ENCODE measurements at regions of chr17 and their contacts with region 1.

Region 1: GRCh38 chr17:48101012-48101720 is at the start of gene CBX1:
- DNase-seq: peak; percentile 83 to 94
- H3K4me3 ChIP-seq: peak within 1 kb of the TSS; percentile 89
- H3K27ac ChIP-seq: peak within 1 kb of the TSS; percentile 71
- H3K4me1 ChIP-seq: peaks cover 25% of the 10 kb centered on the region
- H3K27me3 ChIP-seq: no peaks in the 10 kb centered on the region
- CTCF ChIP-seq: no peak
- total RNA-seq, gene CBX1: 73.6 and 93.9 TPM in 2 replicates

Region 2: GRCh38 chr17:48047741-48048383 is 53.3 kb before region 1 on chr17 and contains the start of gene NFE2L1:
- CTCF ChIA-PET with region 1: no interaction called
- POLR2A ChIA-PET with region 1: interaction called, 4 read pairs
- intact Hi-C with region 1: loop called (anchors 5 kb)
- DNase-seq: peak; percentile 96 to 99
- H3K4me3 ChIP-seq: peak within 1 kb of the TSS; percentile 70
- H3K27ac ChIP-seq: peak within 1 kb of the TSS; percentile 82
- H3K4me1 ChIP-seq: peaks cover 48% of the 10 kb centered on the region
- H3K27me3 ChIP-seq: no peaks in the 10 kb centered on the region
- CTCF ChIP-seq: no peak
- total RNA-seq, gene NFE2L1: 85.5 and 91.7 TPM in 2 replicates